OCI-LY7 (cell line): ENCODE measurements at regions of chr6 and their contacts with region 1.

Region 1: GRCh38 chr6:44074439-44075136 is 52.7 kb downstream of the MRPL14 start:
- DNase-seq: peak; percentile 88
- H3K4me3 ChIP-seq: peak overlapping the region; percentile 68
- H3K27ac ChIP-seq: no peak overlapping the region
- H3K4me1 ChIP-seq: peaks cover 46% of the 10 kb centered on the region
- CTCF ChIP-seq: peak; percentile 93

Region 2: GRCh38 chr6:43516697-43517504 is 557.7 kb before region 1 on chr6 and contains the starts of genes POLR1C and YIPF3:
- CTCF ChIA-PET with region 1: no interaction called
- POLR2A ChIA-PET with region 1: no interaction called
- intact Hi-C with region 1: loop called (anchors 10 kb)
- DNase-seq: peak; percentile 99
- H3K4me3 ChIP-seq: peak within 1 kb of the TSS; percentile 95
- H3K27ac ChIP-seq: peak within 1 kb of the TSS; percentile 52
- H3K4me1 ChIP-seq: peaks cover 20% of the 10 kb centered on the region
- CTCF ChIP-seq: no peak
- total RNA-seq, gene POLR1C: 40.7 and 46.0 TPM in 2 replicates
- total RNA-seq, gene YIPF3: 31.8 and 38.2 TPM in 2 replicates

Region 3: GRCh38 chr6:43629505-43630300 is 444.9 kb before region 1 on chr6:
- CTCF ChIA-PET with region 1: no interaction called
- POLR2A ChIA-PET with region 1: no interaction called
- intact Hi-C with region 1: loop called (anchors 10 kb)
- DNase-seq: peak; percentile 99
- H3K4me3 ChIP-seq: peak overlapping the region; percentile 75
- H3K27ac ChIP-seq: peak overlapping the region; percentile 95
- H3K4me1 ChIP-seq: peaks cover 50% of the 10 kb centered on the region
- CTCF ChIP-seq: no peak

Region 4: GRCh38 chr6:44002593-44003344 is 71.8 kb before region 1 on chr6:
- CTCF ChIA-PET with region 1: no interaction called
- POLR2A ChIA-PET with region 1: no interaction called
- intact Hi-C with region 1: loop called (anchors 5 kb)
- DNase-seq: peak; percentile 15
- H3K4me3 ChIP-seq: peak overlapping the region; percentile 22
- H3K27ac ChIP-seq: no peak overlapping the region
- H3K4me1 ChIP-seq: peaks cover 15% of the 10 kb centered on the region
- CTCF ChIP-seq: no peak